ENCODE measurements at regions of chr12 and their contacts with region 1.

Region 1: DNA sequence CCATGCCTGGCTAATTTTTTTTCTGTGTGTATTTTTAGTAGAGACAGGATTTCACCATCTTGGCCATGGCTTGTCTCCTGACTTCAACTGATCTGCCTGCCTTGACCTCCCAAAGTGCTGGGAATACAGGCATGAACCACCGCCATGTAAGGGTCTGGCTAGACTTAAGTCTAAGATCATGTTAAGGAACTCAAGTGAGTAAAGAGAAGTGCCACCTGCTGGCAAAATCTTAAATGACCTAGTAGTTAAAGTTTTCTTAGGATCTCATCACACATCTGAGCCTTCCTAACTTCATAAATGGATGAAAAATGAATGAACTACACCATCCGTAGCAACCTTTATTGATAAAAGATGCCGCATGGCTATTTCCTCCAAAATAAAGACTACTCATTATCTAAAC is 1.7 kb upstream of the C12orf56 start:
- DNase-seq: no peak
- ATAC-seq: no peak
- H3K4me3 ChIP-seq: no peak overlapping the region
- H3K27ac ChIP-seq: no peak overlapping the region
- H3K4me1 ChIP-seq: peaks cover 0 to 15% (median 5%) of the 10 kb centered on the region in 12 donors
- H3K27me3 ChIP-seq: peaks cover 0 to 38% (median 18%) of the 10 kb centered on the region in 9 donors
- CTCF ChIP-seq: peak in 6 of 12 donors; percentile 12 to 28 (median 20)
- POLR2A ChIP-seq: no peak

Region 2: GRCh38 chr12:63826006-63826585 is 566.1 kb before region 1 on chr12:
- intact Hi-C with region 1: loop called in 1 of 10 experiments (anchors 10 kb)
- DNase-seq: no peak
- ATAC-seq: peak; percentile 26 to 67 (median 46)
- H3K4me3 ChIP-seq: no peak overlapping the region
- H3K27ac ChIP-seq: no peak overlapping the region
- H3K4me1 ChIP-seq: peaks cover 0 to 8% (median 0%) of the 10 kb centered on the region in 12 donors
- H3K27me3 ChIP-seq: peaks cover 0 to 7% (median 0%) of the 10 kb centered on the region in 9 donors
- CTCF ChIP-seq: peak; percentile 56 to 86 (median 64)
- POLR2A ChIP-seq: no peak

Region 3: DNA sequence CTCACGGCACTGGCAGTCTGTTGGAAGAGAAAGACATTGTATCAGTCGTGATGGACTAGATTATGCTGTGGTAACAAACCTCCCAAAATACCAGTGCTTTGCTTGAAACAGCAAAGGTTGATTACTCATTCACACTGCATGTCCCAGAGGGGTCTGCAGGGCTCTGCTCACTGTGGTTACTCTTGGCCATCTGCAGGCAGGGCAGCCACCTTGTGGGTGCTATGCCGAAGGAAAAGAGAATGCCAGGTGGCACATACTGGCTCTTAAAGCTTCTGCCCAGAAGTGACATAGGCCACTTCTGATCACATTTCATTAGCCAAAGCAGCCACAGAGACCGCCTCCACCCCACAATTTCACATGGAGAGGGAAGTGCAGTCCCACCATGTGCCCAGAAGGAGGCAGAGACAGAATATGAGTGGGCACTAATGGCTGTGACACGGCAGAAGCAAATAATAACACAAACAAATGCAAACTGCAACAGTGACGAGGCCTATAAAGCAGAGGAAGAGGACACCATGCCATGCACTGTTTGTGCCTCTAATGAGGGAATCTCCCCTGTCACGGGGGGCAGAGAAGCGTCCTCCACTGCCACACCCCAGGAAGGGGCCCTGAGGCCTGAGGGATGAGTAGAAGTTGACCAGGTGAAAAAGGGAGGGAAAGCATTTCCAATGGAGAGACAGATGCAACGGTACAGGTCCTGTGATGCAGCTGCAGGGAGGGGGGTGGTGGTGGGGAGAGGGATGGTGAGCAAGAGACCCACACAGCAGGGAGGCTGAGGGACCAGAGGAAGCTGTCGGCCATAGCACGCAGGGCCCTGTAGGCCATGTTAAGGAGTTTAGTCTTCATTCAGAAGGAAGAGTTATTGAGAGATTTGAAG is 118.5 kb before region 1 on chr12:
- intact Hi-C with region 1: loop called in 1 of 10 experiments (anchors 10 kb)
- DNase-seq: no peak
- ATAC-seq: no peak
- H3K4me3 ChIP-seq: no peak overlapping the region
- H3K27ac ChIP-seq: no peak overlapping the region
- H3K4me1 ChIP-seq: no peaks in the 10 kb centered on the region
- H3K27me3 ChIP-seq: no peaks in the 10 kb centered on the region
- CTCF ChIP-seq: peak in 9 of 12 donors; percentile 18 to 47 (median 36)
- POLR2A ChIP-seq: no peak

Measured in heart left ventricle (tissue), 16 donors.